Heart right ventricle (tissue), 16 donors: ENCODE measurements at regions of chr13 and their contacts with region 1.

Region 1: DNA sequence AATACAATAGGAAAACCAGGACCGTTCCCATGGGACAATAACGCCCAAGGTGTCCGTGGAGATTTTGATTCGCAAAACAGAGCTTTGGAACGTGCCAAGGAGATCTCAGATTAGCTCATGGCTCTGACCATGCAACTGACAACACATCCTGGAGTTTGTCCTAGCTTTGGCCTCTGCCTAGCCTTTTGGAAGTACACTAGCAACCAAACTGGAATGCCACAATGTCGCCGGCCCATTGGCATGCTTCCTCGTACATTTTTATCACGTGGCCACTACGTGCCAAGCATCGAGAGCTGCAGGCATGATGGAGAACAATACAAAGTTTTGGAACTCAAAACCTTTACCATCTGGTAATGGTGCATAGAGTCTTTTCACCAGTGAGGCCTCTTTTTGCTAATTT is 256.5 kb downstream of the DCLK1 start:
- DNase-seq: peak; percentile 60 to 63
- ATAC-seq: peak; percentile 72 to 93 (median 88)
- H3K4me3 ChIP-seq: no peak overlapping the region
- H3K27ac ChIP-seq: peak overlapping the region in 9 of 10 donors; percentile 8 to 76 (median 62)
- H3K4me1 ChIP-seq: peaks cover 0 to 31% (median 11%) of the 10 kb centered on the region in 9 donors
- H3K27me3 ChIP-seq: no peaks in the 10 kb centered on the region
- CTCF ChIP-seq: no peak

Region 2: GRCh38 chr13:35947315-35947714 is 72.6 kb after region 1 on chr13:
- intact Hi-C with region 1: loop called in 3 of 10 experiments (anchors 5 to 10 kb)
- DNase-seq: no peak
- ATAC-seq: no peak
- H3K4me3 ChIP-seq: no peak overlapping the region
- H3K27ac ChIP-seq: no peak overlapping the region
- H3K4me1 ChIP-seq: no peaks in the 10 kb centered on the region
- H3K27me3 ChIP-seq: no peaks in the 10 kb centered on the region
- CTCF ChIP-seq: no peak